GM10248 (cell line): ENCODE measurements at regions of chr3 and their contacts with region 1.

Region 1: DNA sequence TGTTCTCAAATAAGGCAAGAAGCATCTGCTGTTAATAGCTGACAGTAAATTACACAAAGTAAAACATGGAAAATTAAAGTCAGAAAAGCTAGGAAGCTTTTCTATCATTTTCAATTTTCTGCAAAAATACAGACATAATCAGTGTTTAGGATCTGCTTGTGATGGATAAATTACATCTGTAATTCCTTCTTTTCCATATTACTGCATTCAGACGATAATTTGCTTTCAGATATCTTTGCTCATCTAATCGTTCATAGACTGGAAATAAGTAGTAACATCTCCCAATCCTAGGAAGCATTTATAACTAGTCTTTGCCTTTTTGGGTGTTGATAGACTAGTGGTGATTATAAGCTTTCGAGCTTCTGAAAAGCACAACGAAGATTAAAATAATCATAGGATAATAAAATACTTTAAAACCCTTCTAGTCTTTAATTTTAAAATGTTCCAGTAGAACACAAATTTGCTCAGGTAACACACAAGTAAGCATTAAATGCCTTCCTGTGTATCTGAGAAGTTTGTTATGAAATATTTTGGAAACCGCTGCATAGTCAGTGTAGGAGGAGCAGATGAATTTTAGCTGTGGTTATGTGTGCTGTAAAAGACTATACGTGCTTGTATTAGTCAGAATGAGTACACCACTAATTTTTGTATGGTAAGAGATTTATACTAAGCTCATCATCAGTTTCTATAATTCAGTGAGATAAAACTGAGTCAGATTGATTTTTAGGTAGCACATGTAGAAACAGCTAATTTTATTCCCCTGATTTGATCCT is 41.0 kb downstream of the MBNL1 start:
- DNase-seq: no peak
- CTCF ChIP-seq: no peak

Region 2: DNA sequence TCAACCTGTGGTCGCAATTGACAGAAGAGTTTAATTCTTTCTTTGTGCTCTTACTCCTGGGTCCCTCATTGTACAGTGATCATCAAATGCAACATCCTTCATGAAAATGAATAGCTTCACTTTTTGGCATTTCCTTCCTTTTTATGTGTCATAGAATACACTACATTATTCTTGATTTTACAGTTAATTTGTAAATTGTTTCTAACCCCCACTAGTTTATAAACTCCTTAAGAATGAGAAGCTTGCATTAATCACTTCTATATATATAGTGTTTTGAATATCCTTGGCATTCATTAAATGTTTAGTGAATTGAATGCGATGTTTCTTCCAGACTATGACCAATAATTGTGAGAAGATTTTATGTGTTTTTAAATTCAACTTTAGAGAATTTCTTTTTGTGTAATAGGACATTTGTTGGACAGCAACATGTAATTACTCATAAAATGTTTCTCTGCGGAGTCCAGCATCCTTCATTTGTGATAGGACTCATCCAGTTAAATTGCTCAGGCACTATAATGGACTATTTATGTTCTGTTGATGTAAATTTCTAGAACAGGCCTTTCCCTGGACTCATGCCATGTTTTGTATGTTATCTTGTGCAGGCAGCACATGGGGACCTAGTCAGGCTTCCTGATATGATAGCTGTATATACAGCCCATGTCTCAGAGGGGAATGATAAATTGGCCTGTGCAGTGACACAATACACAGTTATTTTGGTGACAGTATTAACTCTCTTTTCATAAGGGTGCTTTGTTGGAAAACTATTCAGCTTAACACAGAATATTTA is 10.3 kb after region 1 on chr3:
- CTCF ChIA-PET with region 1: interaction called, 25 read pairs
- POLR2A ChIA-PET with region 1: no interaction called
- DNase-seq: no peak
- CTCF ChIP-seq: no peak

Region 3: GRCh38 chr3:152331018-152331541 is 21.4 kb after region 1 on chr3:
- CTCF ChIA-PET with region 1: interaction called, 12 read pairs
- POLR2A ChIA-PET with region 1: no interaction called
- DNase-seq: no peak
- CTCF ChIP-seq: no peak